Activated CD4-positive, alpha-beta memory T cell treated with anti-CD3 and anti-CD28 coated beads for 36 hours (primary cell): ENCODE measurements at regions of chr13 and their contacts with region 1.

Region 1: GRCh38 chr13:98445340-98446233 is 131.3 kb downstream of the STK24 start:
- DNase-seq: peak; percentile 88
- H3K4me3 Mint-ChIP-seq: no peak overlapping the region
- H3K27ac Mint-ChIP-seq: peak overlapping the region; percentile 83
- H3K4me1 Mint-ChIP-seq: peaks cover 17% of the 10 kb centered on the region
- H3K27me3 Mint-ChIP-seq: no peaks in the 10 kb centered on the region

Region 2: DNA sequence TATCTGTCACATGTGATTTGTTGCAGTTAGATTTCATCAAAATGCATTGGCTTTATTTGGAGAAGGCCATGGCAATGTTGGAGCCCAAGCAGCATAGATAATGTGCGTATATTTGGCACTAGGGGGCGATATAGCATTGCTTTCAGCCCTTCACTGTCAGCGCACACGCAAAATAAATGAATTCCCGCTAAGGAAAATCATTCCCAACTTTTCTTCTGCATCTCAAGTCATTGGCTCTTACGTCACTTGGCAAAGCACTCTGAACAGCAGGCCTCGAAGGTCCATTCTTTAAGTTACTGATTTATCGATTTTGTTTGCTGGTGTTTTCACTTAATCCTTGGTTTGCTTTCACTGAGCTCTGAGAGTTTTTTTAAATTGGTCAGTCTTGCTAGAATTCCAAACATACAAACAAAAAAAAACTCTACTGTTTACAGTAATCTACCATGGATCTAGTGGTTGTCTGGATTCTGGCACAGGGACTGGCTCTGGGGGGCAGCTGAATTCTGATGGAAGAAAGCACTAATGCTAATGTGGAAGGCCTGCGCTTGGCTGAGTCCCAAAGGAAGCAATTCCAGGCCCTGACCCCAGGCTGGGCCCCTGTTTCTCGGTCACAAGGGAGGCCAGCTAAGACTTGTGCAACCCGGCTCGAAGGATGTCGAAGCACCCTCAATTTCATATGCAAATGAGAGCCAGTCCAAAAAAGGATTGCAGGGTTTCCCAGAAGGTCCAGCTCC is 589.9 kb before region 1 on chr13:
- CTCF ChIA-PET with region 1: interaction called, 8 read pairs
- POLR2A ChIA-PET with region 1: no interaction called
- intact Hi-C with region 1: loop called (anchors 10 kb)
- DNase-seq: peak; percentile 22
- H3K4me3 Mint-ChIP-seq: no peak overlapping the region
- H3K27ac Mint-ChIP-seq: no peak overlapping the region
- H3K4me1 Mint-ChIP-seq: no peaks in the 10 kb centered on the region
- H3K27me3 Mint-ChIP-seq: peaks cover 3% of the 10 kb centered on the region

Region 3: GRCh38 chr13:98014766-98015165 is 430.8 kb before region 1 on chr13:
- CTCF ChIA-PET with region 1: no interaction called
- POLR2A ChIA-PET with region 1: no interaction called
- intact Hi-C with region 1: no loop called
- DNase-seq: no peak
- H3K4me3 Mint-ChIP-seq: no peak overlapping the region
- H3K27ac Mint-ChIP-seq: no peak overlapping the region
- H3K4me1 Mint-ChIP-seq: peaks cover 4% of the 10 kb centered on the region
- H3K27me3 Mint-ChIP-seq: no peaks in the 10 kb centered on the region

Region 4: DNA sequence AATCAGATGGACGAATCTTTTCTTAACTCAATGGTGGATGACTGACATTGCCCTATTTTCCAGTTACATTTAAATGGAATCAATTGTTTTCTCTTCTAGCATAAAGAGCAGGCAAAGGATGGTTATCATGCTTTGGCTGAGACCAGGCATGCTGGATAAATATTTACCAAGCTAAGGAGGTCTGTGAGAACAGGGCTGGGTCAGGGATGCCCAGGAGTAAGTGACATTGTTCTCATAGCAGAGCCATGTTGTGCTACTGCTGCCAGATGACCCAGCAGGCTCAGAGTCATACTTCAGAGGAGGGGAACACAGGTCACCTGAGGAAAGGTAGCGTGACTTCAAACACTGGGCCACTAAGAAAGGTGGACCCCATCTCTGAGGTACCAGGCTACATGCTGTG is 152.5 kb before region 1 on chr13:
- CTCF ChIA-PET with region 1: no interaction called
- POLR2A ChIA-PET with region 1: no interaction called
- intact Hi-C with region 1: no loop called
- DNase-seq: no peak
- H3K4me3 Mint-ChIP-seq: no peak overlapping the region
- H3K27ac Mint-ChIP-seq: no peak overlapping the region
- H3K4me1 Mint-ChIP-seq: no peaks in the 10 kb centered on the region
- H3K27me3 Mint-ChIP-seq: peaks cover 6% of the 10 kb centered on the region

Region 5: GRCh38 chr13:98466634-98467236 is 21.1 kb after region 1 on chr13:
- CTCF ChIA-PET with region 1: interaction called, 18 read pairs
- POLR2A ChIA-PET with region 1: no interaction called
- intact Hi-C with region 1: no loop called
- DNase-seq: peak; percentile 64
- H3K4me3 Mint-ChIP-seq: no peak overlapping the region
- H3K27ac Mint-ChIP-seq: peak overlapping the region; percentile 38
- H3K4me1 Mint-ChIP-seq: peaks cover 19% of the 10 kb centered on the region
- H3K27me3 Mint-ChIP-seq: no peaks in the 10 kb centered on the region

Region 6: DNA sequence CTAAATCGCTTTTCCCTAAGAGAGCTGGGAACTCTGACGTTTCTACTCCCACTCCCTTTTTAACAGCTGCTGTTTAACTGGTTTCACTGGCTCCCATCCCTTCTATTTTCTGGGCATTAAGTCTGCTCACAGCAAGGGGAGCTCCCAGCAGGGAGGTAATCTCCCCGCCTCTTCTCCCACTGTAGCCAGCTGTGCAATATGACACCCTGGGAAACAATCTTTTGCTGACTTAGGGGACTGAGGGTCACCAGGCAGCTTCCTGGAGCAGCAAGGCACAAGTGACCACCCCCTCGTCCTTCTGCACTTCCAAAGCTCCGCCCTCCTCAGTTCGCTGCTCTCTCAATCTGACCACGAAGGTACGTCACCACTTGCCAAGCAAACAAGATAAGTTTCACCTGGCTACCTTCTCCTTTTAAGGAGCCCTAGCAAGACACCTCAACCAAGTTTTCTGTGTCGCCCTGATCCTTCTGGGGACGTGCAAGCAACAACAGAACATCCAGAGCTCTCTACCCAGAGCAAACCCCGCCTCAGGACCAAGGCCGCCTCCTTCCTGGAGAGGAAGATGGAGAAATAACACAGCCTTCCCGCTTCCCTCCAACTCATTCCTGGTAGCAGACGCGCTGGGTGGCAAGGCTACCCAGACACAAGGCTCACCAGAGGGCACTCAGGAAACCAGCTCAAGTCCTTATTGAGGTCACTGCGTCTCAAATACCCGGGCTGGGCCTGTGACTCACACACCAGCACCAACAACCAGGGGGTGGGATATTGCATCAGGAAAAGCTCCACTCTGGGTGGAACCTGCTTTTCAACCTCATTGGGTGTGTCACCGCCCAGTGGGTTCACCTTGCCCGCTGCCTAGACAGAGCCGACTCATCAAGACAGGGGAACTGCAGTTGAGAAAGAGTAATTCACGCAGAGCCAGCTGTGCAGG is 39.0 kb after region 1 on chr13:
- CTCF ChIA-PET with region 1: interaction called, 7 read pairs
- POLR2A ChIA-PET with region 1: no interaction called
- intact Hi-C with region 1: loop called (anchors 5 kb)
- DNase-seq: peak; percentile 87
- H3K4me3 Mint-ChIP-seq: peak overlapping the region; percentile 30
- H3K27ac Mint-ChIP-seq: peak overlapping the region; percentile 83
- H3K4me1 Mint-ChIP-seq: peaks cover 92% of the 10 kb centered on the region
- H3K27me3 Mint-ChIP-seq: no peaks in the 10 kb centered on the region

Region 7: DNA sequence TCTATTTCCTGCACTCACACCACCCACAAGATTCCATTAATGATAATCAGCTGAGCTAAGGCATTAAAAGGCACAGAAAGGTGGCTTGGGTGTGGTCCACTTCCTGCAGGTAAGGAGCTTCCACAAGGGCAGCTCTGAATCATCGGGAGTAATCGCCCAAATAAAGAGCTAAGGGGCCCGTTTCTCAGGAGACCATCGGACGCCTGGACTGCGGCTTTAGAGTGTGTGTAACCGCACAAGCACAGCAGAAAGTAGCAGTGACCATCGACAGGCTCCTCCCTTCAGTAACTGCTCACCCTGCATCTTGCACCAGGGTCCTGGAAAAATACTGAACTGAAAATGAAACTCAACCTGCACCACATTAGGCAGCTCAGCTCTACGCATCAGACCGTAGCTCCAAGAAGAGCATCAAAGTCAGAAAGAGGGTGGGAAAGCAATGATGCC is 125.4 kb after region 1 on chr13:
- CTCF ChIA-PET with region 1: interaction called, 12 read pairs
- POLR2A ChIA-PET with region 1: interaction called, 3 read pairs
- intact Hi-C with region 1: no loop called
- DNase-seq: peak; percentile 67
- H3K4me3 Mint-ChIP-seq: peak overlapping the region; percentile 75
- H3K27ac Mint-ChIP-seq: peak overlapping the region; percentile 98
- H3K4me1 Mint-ChIP-seq: peaks cover 89% of the 10 kb centered on the region
- H3K27me3 Mint-ChIP-seq: no peaks in the 10 kb centered on the region

Region 8: GRCh38 chr13:98664039-98664438 is 218.5 kb after region 1 on chr13:
- CTCF ChIA-PET with region 1: interaction called, 17 read pairs
- POLR2A ChIA-PET with region 1: interaction called, 4 read pairs
- intact Hi-C with region 1: no loop called
- DNase-seq: peak; percentile 87
- H3K4me3 Mint-ChIP-seq: no peak overlapping the region
- H3K27ac Mint-ChIP-seq: peak overlapping the region; percentile 56
- H3K4me1 Mint-ChIP-seq: peaks cover 16% of the 10 kb centered on the region
- H3K27me3 Mint-ChIP-seq: peaks cover 9% of the 10 kb centered on the region

Region 9: DNA sequence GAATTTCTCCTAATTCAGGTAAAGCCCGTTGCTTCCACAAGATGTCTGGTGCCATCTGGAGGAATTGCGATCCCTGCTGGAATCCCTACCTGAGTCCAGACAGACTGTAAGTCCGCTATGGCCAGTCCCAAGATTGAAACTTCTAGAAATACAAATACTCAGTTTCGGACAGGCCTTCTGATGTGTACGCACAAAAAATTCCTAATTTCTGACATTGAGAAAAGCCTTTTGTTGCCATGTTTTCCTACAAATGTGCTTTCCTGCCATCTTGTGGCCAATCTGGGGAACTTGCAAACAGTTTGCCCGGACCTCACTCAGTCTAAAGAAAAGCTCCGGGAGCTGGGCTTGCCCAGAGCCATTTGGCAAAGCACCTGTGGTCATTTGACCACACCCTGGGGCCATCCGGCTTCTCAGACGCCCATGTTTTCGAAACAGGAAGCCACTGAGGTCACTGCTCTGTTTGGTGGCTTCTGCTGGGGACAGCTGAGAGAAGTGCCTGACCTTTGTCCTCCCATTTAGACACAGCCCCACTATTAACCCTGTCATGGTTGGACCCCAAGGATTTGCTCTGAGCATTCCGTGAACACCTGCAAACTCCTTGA is 227.5 kb after region 1 on chr13:
- CTCF ChIA-PET with region 1: interaction called, 79 read pairs
- POLR2A ChIA-PET with region 1: no interaction called
- intact Hi-C with region 1: loop called (anchors 1 kb)
- DNase-seq: peak; percentile 58
- H3K4me3 Mint-ChIP-seq: no peak overlapping the region
- H3K27ac Mint-ChIP-seq: no peak overlapping the region
- H3K4me1 Mint-ChIP-seq: no peaks in the 10 kb centered on the region
- H3K27me3 Mint-ChIP-seq: peaks cover 2% of the 10 kb centered on the region